Activated CD4-positive, alpha-beta T cell treated with anti-CD3 and anti-CD28 coated beads, Interleukin-2, amount 10 ng/mL, durations not matched to agents 24 days and 14 days (primary cell): ENCODE measurements at regions of chr1 and their contacts with region 1.

Region 1: GRCh38 chr1:172484233-172484632 is 40.4 kb upstream of the PIGC start:
- DNase-seq: no peak
- H3K4me3 Mint-ChIP-seq: no peak overlapping the region
- H3K27ac Mint-ChIP-seq: no peak overlapping the region
- H3K4me1 Mint-ChIP-seq: peaks cover 18% of the 10 kb centered on the region
- H3K27me3 Mint-ChIP-seq: peaks cover 34% of the 10 kb centered on the region

Region 2: DNA sequence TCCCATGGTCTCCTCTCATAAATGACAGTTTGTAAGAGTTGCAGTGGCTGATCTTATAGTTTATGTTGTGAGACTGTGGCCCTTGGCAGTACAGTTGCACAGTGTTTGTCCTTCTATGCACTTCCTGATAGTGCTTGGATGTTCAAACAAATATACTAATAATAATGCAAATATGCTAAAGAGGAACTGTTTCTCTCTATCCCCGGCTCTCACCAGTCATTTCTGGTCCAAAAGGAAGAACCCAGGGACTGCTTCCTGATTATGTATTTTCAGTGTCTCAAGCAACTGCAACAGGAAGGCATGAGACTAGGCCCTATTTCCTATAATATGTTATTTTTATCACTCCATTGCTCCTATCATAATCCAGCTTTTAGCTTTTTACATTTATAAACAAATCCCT is 31.7 kb after region 1 on chr1:
- intact Hi-C with region 1: loop called (anchors 5 kb)
- DNase-seq: no peak
- H3K4me3 Mint-ChIP-seq: no peak overlapping the region
- H3K27ac Mint-ChIP-seq: no peak overlapping the region
- H3K4me1 Mint-ChIP-seq: no peaks in the 10 kb centered on the region
- H3K27me3 Mint-ChIP-seq: peaks cover 14% of the 10 kb centered on the region